Activated CD4-positive, alpha-beta memory T cell treated with anti-CD3 and anti-CD28 coated beads for 36 hours (primary cell): ENCODE measurements at regions of chr2 and their contacts with region 1.

Region 1: DNA sequence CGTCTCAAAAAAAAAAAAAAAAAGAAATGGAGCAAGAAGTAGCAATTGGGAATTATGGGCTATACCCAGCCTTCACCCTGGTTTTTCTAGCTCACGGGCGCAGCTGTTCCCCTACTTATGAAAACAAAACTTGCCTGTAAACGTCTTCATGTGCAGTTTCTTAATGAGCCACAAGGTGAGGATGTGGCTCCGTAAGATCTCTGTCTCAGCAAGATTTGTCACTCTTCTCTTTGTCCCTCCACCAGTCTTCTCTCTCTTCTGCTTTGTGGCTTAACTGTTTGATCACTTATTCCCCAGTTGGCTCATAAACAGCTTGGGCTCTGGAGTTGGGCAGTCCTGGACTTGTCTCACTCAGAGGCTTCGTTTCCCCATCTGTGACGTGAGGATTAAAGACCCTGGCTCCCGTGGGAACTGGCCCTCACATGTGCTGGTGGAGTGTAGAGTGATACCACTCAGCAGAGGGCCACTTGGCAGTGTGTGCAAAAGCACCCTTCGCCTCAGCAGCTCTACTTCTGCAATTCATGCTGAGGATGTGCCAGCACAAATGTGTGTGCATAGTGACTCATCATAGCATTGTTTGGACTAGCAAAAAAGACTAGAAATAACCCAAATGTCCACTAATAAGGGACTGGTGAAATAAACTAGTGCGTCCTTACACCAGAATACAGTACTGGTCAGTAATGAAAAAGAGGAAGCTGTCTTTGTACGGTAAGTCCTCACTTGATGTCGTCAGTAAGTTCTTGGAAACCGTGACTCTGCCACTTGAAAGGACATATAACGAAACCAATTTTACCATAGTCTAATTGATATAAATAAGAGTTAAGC is 8.7 kb downstream of the CEP68 start:
- DNase-seq: peak; percentile 62
- H3K4me3 Mint-ChIP-seq: no peak overlapping the region
- H3K27ac Mint-ChIP-seq: peak overlapping the region; percentile 80
- H3K4me1 Mint-ChIP-seq: peaks cover 43% of the 10 kb centered on the region
- H3K27me3 Mint-ChIP-seq: no peaks in the 10 kb centered on the region

Region 2: GRCh38 chr2:65129826-65130663 is 65.1 kb after region 1 on chr2 and contains the start of gene RAB1A:
- CTCF ChIA-PET with region 1: interaction called, 29 read pairs
- POLR2A ChIA-PET with region 1: interaction called, 10 read pairs
- intact Hi-C with region 1: loop called (anchors 2 kb)
- DNase-seq: peak; percentile 100
- H3K4me3 Mint-ChIP-seq: peak within 1 kb of the TSS; percentile 96
- H3K27ac Mint-ChIP-seq: peak within 1 kb of the TSS; percentile 95
- H3K4me1 Mint-ChIP-seq: peaks cover 34% of the 10 kb centered on the region
- H3K27me3 Mint-ChIP-seq: no peaks in the 10 kb centered on the region
- total RNA-seq, gene RAB1A: 84.3 to 84.5 TPM

Region 3: DNA sequence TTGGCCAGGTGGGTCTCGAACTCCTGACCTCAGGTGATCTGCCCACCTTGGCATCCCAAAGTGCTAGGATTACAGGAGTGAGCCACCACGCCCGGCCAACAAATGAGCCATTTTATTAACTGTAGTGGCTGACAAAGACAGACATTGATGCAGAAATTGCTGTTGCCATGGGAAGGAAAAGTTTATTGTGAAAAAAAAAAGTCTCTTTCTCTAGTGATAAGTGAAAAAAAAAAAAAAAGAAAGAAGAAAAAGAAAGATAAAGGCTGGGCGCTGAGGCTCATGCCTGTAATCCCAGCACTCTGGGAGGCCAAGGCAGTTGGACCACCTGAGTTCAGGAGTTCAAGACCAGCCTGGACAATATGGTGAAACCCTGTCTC is 104.8 kb after region 1 on chr2:
- CTCF ChIA-PET with region 1: interaction called, 59 read pairs
- POLR2A ChIA-PET with region 1: no interaction called
- intact Hi-C with region 1: loop called (anchors 1 kb)
- DNase-seq: no peak
- H3K4me3 Mint-ChIP-seq: no peak overlapping the region
- H3K27ac Mint-ChIP-seq: no peak overlapping the region
- H3K4me1 Mint-ChIP-seq: no peaks in the 10 kb centered on the region
- H3K27me3 Mint-ChIP-seq: no peaks in the 10 kb centered on the region

Region 4: GRCh38 chr2:65227425-65228262 is 162.7 kb after region 1 on chr2 and contains the start of gene ACTR2:
- CTCF ChIA-PET with region 1: interaction called, 19 read pairs
- POLR2A ChIA-PET with region 1: interaction called, 4 read pairs
- intact Hi-C with region 1: loop called (anchors 2 kb)
- DNase-seq: peak; percentile 97
- H3K4me3 Mint-ChIP-seq: peak within 1 kb of the TSS; percentile 100
- H3K27ac Mint-ChIP-seq: peak within 1 kb of the TSS; percentile 99
- H3K4me1 Mint-ChIP-seq: peaks cover 32% of the 10 kb centered on the region
- H3K27me3 Mint-ChIP-seq: no peaks in the 10 kb centered on the region
- total RNA-seq, gene ACTR2: 401 to 406 TPM

Region 5: GRCh38 chr2:65309708-65310107 is 244.8 kb after region 1 on chr2:
- CTCF ChIA-PET with region 1: no interaction called
- POLR2A ChIA-PET with region 1: no interaction called
- intact Hi-C with region 1: no loop called
- DNase-seq: no peak
- H3K4me3 Mint-ChIP-seq: no peak overlapping the region
- H3K27ac Mint-ChIP-seq: no peak overlapping the region
- H3K4me1 Mint-ChIP-seq: no peaks in the 10 kb centered on the region
- H3K27me3 Mint-ChIP-seq: no peaks in the 10 kb centered on the region

Region 6: DNA sequence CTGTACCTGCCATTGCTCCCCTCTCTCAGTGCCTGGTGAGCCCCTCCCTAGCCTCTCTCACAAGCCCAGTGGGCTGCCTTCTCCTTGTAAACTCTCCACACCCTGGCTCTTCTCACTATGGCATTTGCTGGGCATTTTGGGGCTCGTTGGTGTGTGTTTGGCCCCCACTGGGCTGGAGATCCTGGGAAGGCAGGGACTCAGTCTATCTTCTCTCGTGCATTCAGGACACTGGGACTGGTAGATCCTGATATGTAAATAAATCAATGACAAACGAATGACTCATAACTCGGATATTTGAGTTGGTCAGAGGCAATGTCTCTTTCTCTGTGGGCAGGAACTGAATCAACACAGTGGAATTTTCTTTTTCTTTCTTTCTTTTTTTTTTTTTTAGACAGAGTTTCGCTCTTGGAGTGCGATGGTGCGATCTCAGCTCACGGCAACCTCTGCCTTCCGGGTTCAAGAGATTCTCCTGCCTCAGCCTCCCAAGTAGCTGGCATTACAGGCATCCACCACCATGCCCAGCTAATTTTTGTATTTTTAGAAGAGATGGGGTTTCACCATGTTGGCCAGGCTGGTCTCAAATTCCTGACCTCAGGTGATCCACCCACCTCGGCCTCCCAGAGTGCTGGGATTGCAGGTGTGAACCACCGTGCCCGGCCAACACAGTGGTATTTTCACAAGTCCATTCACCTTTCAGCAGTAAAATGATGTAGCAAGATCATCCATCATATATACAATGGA is 512.1 kb after region 1 on chr2:
- CTCF ChIA-PET with region 1: interaction called, 6 read pairs
- POLR2A ChIA-PET with region 1: no interaction called
- intact Hi-C with region 1: loop called (anchors 1 kb)
- DNase-seq: no peak
- H3K4me3 Mint-ChIP-seq: no peak overlapping the region
- H3K27ac Mint-ChIP-seq: no peak overlapping the region
- H3K4me1 Mint-ChIP-seq: peaks cover 3% of the 10 kb centered on the region
- H3K27me3 Mint-ChIP-seq: peaks cover 2% of the 10 kb centered on the region